ENCODE measurements at regions of chr2 and their contacts with region 1.

Region 1: GRCh38 chr2:189115126-189115525 is 64.4 kb downstream of the COL5A2 start:
- DNase-seq: no peak
- H3K4me3 ChIP-seq: no peak overlapping the region
- H3K27ac ChIP-seq: no peak overlapping the region
- H3K4me1 ChIP-seq: no peaks in the 10 kb centered on the region
- H3K27me3 ChIP-seq: no peaks in the 10 kb centered on the region
- CTCF ChIP-seq: no peak
- POLR2A ChIP-seq: no peak

Region 2: DNA sequence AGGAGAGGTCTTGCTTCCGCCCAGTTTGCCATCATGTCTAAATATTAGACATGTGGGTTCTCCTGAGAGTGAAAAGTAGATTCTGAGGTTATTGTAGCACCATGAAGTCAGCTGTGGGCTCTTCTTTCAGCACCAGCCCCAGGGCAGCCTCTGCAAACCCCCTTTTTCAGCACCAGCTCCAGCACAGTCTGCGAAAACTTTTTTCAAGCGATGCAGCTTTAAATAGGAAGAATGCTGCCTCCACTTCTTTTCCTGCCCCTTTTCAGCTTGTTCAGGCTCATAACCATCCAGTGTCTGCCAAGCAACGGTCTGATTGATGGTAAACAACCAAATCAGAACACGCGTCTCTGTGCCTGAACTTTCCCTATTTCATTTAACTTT is 64.4 kb after region 1 on chr2 and contains the start of gene COL5A2:
- intact Hi-C with region 1: loop called (anchors 5 kb)
- DNase-seq: no peak
- H3K4me3 ChIP-seq: peak within 1 kb of the TSS; percentile 25 to 27
- H3K27ac ChIP-seq: peak within 1 kb of the TSS; percentile 2 to 53
- H3K4me1 ChIP-seq: no peaks in the 10 kb centered on the region
- H3K27me3 ChIP-seq: no peaks in the 10 kb centered on the region
- CTCF ChIP-seq: no peak
- POLR2A ChIP-seq: no peak
- total RNA-seq, gene COL5A2: 8.2 to 17.6 TPM

Region 3: DNA sequence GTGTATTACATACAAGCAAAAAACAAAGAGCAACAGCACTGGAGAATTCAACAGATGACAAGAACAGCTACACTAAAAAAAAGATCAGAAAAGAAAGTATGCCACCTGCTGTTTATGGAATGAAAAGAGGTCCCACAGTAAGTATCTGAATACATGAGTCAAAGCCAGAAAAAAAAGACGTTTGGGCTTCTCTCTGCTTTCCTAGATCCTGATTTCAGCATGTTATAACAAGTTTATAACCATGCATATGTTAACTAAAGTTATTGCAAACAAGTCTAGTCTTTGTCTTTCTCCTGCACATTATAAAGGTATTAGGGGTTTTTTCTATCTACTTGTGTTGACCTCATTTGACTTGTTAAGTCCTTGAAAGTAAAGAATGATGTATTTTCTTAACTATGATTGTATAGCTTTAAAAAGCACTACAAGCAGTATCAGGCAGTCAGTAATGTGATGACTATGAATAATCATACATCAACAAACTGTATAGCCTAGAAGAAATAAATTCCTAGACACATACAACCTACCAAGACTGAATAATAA is 172.9 kb after region 1 on chr2:
- intact Hi-C with region 1: loop called (anchors 5 kb)
- DNase-seq: no peak
- H3K4me3 ChIP-seq: no peak overlapping the region
- H3K27ac ChIP-seq: no peak overlapping the region
- H3K4me1 ChIP-seq: no peaks in the 10 kb centered on the region
- H3K27me3 ChIP-seq: no peaks in the 10 kb centered on the region
- CTCF ChIP-seq: peak in 3 of 4 experiments; percentile 41 to 56 (median 50)
- POLR2A ChIP-seq: no peak